ENCODE measurements at regions of chr3 and their contacts with region 1.

Region 1: DNA sequence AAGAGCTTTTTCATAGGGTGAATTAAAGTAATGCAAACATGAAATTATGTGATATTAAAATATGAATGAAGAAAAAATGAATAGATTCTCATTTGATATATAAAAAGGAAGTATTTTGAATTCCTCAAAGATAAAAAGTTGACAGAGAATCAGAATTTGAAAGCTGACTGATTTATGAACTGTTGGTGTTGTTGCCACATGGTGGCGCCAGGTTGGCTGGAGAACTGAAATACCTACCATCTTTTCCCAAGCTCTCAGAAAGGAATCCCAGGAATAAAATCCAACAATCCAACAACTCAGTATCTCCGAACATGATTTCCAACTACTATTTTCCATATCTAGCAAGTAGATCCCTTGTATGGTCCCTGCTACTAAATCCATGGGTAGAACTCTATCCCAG is 3.1 kb downstream of the MYRIP start:
- DNase-seq: peak; percentile 6
- ATAC-seq: no peak
- H3K4me3 ChIP-seq: no peak overlapping the region
- H3K27ac ChIP-seq: no peak overlapping the region
- H3K4me1 ChIP-seq: peaks cover 19% of the 10 kb centered on the region
- H3K27me3 ChIP-seq: peaks cover 7 to 31% of the 10 kb centered on the region in 2 experiments; a peak in 4 of 5 replicates
- CTCF ChIP-seq: peak; percentile 47
- EP300 ChIP-seq: no peak
- POLR2A ChIP-seq: no peak
- RAD21 ChIP-seq: no peak

Region 2: GRCh38 chr3:39707314-39707909 is 105.1 kb before region 1 on chr3:
- CTCF ChIA-PET with region 1: no interaction called
- POLR2A ChIA-PET with region 1: no interaction called
- in situ Hi-C with region 1: no loop called
- intact Hi-C with region 1: loop called (anchors 5 kb)
- DNase-seq: peak; percentile 13
- ATAC-seq: peak; percentile 57
- H3K4me3 ChIP-seq: no peak overlapping the region
- H3K27ac ChIP-seq: no peak overlapping the region
- H3K4me1 ChIP-seq: no peaks in the 10 kb centered on the region
- H3K27me3 ChIP-seq: no peaks in the 10 kb centered on the region
- CTCF ChIP-seq: peak; percentile 62
- EP300 ChIP-seq: no peak
- POLR2A ChIP-seq: no peak
- RAD21 ChIP-seq: no peak

Region 3: DNA sequence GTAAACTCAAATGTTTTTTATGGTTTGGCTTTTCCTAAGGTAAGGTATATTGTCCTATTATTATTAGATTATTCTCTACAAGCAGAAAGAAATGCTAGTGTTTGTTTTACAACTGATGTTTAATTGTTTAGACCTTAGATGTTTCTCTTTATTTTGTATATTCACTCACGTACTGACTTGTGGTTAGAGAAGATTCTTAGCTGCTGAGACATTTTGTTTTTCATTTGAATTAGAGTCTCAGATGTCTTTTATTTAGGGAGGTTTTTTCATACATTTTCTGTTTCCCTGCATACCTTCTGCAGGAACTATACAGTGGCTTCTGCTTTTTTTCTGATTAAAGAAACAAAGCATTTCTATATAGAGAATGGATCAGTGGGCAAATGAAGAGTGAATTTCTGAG is 107.7 kb after region 1 on chr3:
- CTCF ChIA-PET with region 1: no interaction called
- POLR2A ChIA-PET with region 1: no interaction called
- in situ Hi-C with region 1: no loop called
- intact Hi-C with region 1: loop called (anchors 10 kb)
- DNase-seq: no peak
- ATAC-seq: no peak
- H3K4me3 ChIP-seq: no peak overlapping the region
- H3K27ac ChIP-seq: no peak overlapping the region
- H3K4me1 ChIP-seq: no peaks in the 10 kb centered on the region
- H3K27me3 ChIP-seq: no peaks in the 10 kb centered on the region
- CTCF ChIP-seq: no peak
- EP300 ChIP-seq: no peak
- POLR2A ChIP-seq: no peak
- RAD21 ChIP-seq: no peak

Region 4: GRCh38 chr3:39970982-39971381 is 158.4 kb after region 1 on chr3:
- CTCF ChIA-PET with region 1: no interaction called
- POLR2A ChIA-PET with region 1: no interaction called
- in situ Hi-C with region 1: no loop called
- intact Hi-C with region 1: loop called (anchors 1 kb)
- DNase-seq: peak; percentile 6
- ATAC-seq: no peak
- H3K4me3 ChIP-seq: no peak overlapping the region
- H3K27ac ChIP-seq: no peak overlapping the region
- H3K4me1 ChIP-seq: no peaks in the 10 kb centered on the region
- H3K27me3 ChIP-seq: no peaks in the 10 kb centered on the region; a peak in 1 of 5 replicates
- CTCF ChIP-seq: no peak
- EP300 ChIP-seq: no peak
- POLR2A ChIP-seq: no peak
- RAD21 ChIP-seq: no peak

Measured in HepG2 (cell line).